MCF 10A (cell line): ENCODE measurements at regions of chr17 and their contacts with region 1.

Region 1: GRCh38 chr17:17613708-17614114 is 22.2 kb upstream of the PEMT start:
- DNase-seq: peak; percentile 69
- H3K4me3 Mint-ChIP-seq: no peak overlapping the region
- H3K27ac Mint-ChIP-seq: no peak overlapping the region
- H3K4me1 Mint-ChIP-seq: no peaks in the 10 kb centered on the region
- H3K27me3 Mint-ChIP-seq: no peaks in the 10 kb centered on the region
- CTCF ChIP-seq: peak; percentile 44

Region 2: DNA sequence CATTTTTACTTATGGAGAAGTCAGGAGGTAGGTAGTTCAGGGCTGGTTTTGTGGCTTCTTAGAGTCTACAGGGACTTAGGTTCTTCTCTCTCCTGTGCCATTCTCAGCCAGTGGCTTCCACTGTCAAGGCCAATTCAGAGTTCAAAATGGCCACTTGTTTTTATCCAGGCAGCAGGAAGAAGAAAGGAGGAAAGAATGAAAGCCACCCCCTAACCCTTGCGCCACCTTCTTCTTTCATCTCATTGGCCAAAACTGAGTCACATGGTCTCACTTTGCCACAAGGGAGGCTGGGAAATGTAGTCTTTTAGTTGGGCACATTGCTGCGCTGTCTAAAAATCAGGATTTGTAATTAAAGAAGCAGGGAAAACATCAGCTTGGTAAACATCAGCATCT is 197.7 kb before region 1 on chr17:
- CTCF ChIA-PET with region 1: no interaction called
- POLR2A ChIA-PET with region 1: no interaction called
- intact Hi-C with region 1: no loop called
- DNase-seq: peak; percentile 87
- H3K4me3 Mint-ChIP-seq: no peak overlapping the region
- H3K27ac Mint-ChIP-seq: no peak overlapping the region
- H3K4me1 Mint-ChIP-seq: peaks cover 21% of the 10 kb centered on the region
- H3K27me3 Mint-ChIP-seq: no peaks in the 10 kb centered on the region
- CTCF ChIP-seq: no peak

Region 3: DNA sequence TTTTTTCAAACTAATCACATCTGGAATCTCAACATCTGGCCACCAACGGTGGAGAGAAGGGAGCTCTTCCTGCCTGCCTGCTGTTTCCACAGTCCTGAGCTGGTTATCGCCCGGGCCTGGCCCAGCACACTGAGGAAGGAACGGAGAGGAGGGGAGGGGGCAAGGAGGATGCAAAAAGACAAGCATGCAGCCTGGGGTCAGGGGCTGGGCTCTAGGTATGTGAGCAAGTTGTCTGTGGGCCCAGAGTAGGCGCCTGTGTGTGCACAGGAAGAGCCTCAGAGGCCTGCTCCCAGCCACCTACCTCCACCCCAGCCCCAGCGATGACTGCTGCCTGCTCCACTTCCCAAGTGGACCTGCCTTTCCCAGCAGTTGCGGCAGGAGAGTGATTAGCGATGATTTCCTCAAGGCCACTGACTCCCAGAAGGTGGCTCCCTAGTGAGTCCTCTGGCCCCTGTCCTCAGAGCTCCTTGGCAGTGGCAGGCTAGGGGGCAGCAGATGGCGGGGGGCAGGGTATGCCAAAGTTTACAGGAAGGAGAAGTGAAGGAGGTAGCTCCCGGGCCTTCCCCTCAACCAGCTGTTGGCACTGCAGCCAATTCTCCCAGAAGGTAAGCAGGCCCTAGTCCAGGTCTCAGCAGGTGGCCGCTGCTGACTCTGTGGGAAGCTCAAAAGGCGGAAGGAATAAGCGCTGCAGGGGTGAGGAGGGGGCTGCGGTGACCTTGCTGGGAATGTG is 90.5 kb before region 1 on chr17:
- CTCF ChIA-PET with region 1: no interaction called
- POLR2A ChIA-PET with region 1: no interaction called
- intact Hi-C with region 1: no loop called
- DNase-seq: peak; percentile 12
- H3K4me3 Mint-ChIP-seq: no peak overlapping the region
- H3K27ac Mint-ChIP-seq: no peak overlapping the region
- H3K4me1 Mint-ChIP-seq: no peaks in the 10 kb centered on the region
- H3K27me3 Mint-ChIP-seq: no peaks in the 10 kb centered on the region
- CTCF ChIP-seq: no peak

Region 4: DNA sequence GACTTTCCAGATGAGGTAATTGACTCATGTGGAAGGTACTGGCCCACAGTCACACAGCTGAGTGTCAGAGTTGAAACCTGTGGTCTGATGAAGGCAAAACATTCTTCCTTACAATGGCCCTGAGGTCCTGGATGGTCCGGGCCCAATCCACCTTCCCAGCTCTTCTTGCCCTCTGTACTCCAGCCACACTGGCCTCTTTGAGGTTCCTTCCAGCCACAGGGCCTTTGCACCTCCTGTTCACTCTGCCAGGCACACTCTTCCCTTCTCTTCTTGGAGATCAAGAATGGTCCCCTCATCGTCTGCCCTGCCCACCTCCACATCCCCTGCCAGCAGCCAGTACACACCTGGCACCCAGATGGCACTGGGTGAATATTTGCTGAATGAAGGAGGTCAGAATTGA is 15.7 kb before region 1 on chr17:
- CTCF ChIA-PET with region 1: interaction called, 15 read pairs
- POLR2A ChIA-PET with region 1: interaction called, 8 read pairs
- intact Hi-C with region 1: no loop called
- DNase-seq: no peak
- H3K4me3 Mint-ChIP-seq: no peak overlapping the region
- H3K27ac Mint-ChIP-seq: no peak overlapping the region
- H3K4me1 Mint-ChIP-seq: no peaks in the 10 kb centered on the region
- H3K27me3 Mint-ChIP-seq: no peaks in the 10 kb centered on the region
- CTCF ChIP-seq: no peak

Region 5: GRCh38 chr17:17603178-17603894 is 10.4 kb before region 1 on chr17:
- CTCF ChIA-PET with region 1: interaction called, 15 read pairs
- POLR2A ChIA-PET with region 1: no interaction called
- intact Hi-C with region 1: no loop called
- DNase-seq: no peak
- H3K4me3 Mint-ChIP-seq: no peak overlapping the region
- H3K27ac Mint-ChIP-seq: no peak overlapping the region
- H3K4me1 Mint-ChIP-seq: no peaks in the 10 kb centered on the region
- H3K27me3 Mint-ChIP-seq: peaks cover 12% of the 10 kb centered on the region
- CTCF ChIP-seq: no peak

Region 6: GRCh38 chr17:17723354-17724261 is 109.9 kb after region 1 on chr17:
- CTCF ChIA-PET with region 1: no interaction called
- POLR2A ChIA-PET with region 1: no interaction called
- intact Hi-C with region 1: no loop called
- DNase-seq: no peak
- H3K4me3 Mint-ChIP-seq: peak overlapping the region; percentile 58
- H3K27ac Mint-ChIP-seq: no peak overlapping the region
- H3K4me1 Mint-ChIP-seq: peaks cover 36% of the 10 kb centered on the region
- H3K27me3 Mint-ChIP-seq: no peaks in the 10 kb centered on the region
- CTCF ChIP-seq: no peak

Region 7: GRCh38 chr17:17739388-17740066 is 125.8 kb after region 1 on chr17:
- CTCF ChIA-PET with region 1: no interaction called
- POLR2A ChIA-PET with region 1: no interaction called
- intact Hi-C with region 1: no loop called
- DNase-seq: peak; percentile 50
- H3K4me3 Mint-ChIP-seq: peak overlapping the region; percentile 52
- H3K27ac Mint-ChIP-seq: peak overlapping the region; percentile 81
- H3K4me1 Mint-ChIP-seq: peaks cover 59% of the 10 kb centered on the region
- H3K27me3 Mint-ChIP-seq: no peaks in the 10 kb centered on the region
- CTCF ChIP-seq: no peak